Right lobe of liver (tissue), 6 donors: ENCODE measurements at regions of chr3 and their contacts with region 1.

Region 1: GRCh38 chr3:177359593-177360357 is 162.5 kb upstream of the TBL1XR1 start:
- DNase-seq: peak; percentile 94
- ATAC-seq: peak; percentile 75 to 85 (median 82)
- H3K4me3 ChIP-seq: peak overlapping the region; percentile 27 to 58 (median 46)
- H3K27ac ChIP-seq: peak overlapping the region; percentile 83 to 91 (median 85)
- H3K4me1 ChIP-seq: peaks cover 4 to 16% (median 8%) of the 10 kb centered on the region in 4 donors
- H3K27me3 ChIP-seq: no peaks in the 10 kb centered on the region
- CTCF ChIP-seq: peak in 2 of 4 donors; percentile 9 to 22
- POLR2A ChIP-seq: peak; percentile 63

Region 2: DNA sequence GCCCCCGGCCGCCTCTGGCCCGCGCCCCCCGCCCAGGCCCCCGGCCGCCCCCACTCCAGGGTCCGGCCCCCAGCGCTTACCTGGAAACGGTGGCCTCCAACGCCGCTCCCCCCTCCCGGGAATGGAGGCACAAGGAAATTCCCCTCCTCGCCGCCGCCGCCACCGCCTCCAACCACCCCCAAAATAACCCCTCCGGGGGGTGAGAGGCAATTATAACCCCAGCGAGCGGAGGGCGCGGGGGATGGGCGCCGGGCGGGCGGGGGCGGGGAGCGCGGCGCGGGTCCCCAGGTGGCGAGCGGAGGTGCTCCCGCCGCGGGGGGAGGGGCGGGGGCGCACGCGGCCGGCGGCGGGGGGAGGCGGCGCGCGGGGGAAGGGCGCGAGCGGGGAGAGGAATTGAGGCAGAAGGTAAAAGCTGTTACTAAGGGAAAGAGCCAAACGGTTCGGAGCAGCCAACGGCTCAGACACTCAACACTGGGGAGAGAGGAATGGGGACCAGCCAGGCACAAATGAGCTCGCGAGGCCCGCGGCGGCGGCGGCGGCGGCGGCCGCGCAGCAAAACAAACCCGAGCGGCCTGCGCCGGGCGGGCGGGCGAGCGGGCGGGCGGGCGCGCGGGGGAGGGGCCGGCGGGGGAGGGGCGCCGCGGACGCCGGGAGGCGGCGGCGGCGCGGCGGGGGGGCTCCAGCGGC is 162.6 kb before region 1 on chr3 and contains the start of gene TBL1XR1:
- intact Hi-C with region 1: loop called in 1 of 2 experiments (anchors 5 kb)
- DNase-seq: peak; percentile 91 to 95 (median 93)
- ATAC-seq: peak; percentile 77 to 90 (median 85)
- H3K4me3 ChIP-seq: peak within 1 kb of the TSS; percentile 62 to 77 (median 75)
- H3K27ac ChIP-seq: peak within 1 kb of the TSS; percentile 86 to 95 (median 93)
- H3K4me1 ChIP-seq: peaks cover 0 to 11% (median 5%) of the 10 kb centered on the region in 4 donors
- H3K27me3 ChIP-seq: no peaks in the 10 kb centered on the region
- CTCF ChIP-seq: no peak
- POLR2A ChIP-seq: no peak
- total RNA-seq, gene TBL1XR1: 32.6 to 80.6 (median 56.2) TPM

Region 3: DNA sequence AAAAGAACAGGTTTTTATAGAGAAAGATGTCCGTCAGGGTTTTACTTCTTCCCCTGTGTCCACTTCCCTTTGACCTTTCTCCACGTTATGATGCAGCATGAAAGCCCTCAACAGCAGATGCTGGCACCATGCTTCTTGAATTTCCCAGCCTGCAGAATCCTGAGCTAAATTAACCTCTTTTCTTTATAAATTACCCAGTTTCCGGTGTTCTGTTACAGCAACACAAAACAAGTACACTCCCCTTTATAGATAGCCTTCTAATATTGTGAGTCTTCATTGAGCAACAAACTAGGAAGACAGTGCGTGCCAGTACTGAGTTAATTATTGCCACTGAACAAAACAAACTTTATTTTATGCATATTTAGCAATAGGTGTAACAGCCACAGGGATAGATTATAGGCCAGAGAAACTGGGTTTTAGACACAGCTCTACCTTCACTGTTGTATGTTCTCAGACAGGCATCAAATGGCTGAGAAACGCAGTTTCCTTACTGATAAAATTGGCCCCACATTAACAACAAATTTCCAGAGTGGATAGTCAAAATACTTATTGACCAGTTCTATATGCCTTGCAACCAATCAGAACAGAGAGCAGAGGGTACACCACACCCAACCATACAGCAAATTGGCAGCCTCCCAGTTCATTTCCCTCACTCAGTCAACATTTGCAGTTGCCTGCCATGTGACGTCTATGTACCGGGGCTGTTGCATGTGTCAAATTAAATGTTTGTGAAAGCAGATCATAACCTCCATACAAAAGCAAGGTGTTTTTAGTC is 148.1 kb before region 1 on chr3:
- intact Hi-C with region 1: loop called in 1 of 2 experiments (anchors 5 kb)
- DNase-seq: peak; percentile 70 to 85 (median 72)
- ATAC-seq: peak; percentile 82 to 92 (median 86)
- H3K4me3 ChIP-seq: peak overlapping the region in 2 of 3 donors; percentile 22 to 23
- H3K27ac ChIP-seq: peak overlapping the region; percentile 70 to 92 (median 84)
- H3K4me1 ChIP-seq: peaks cover 0 to 15% (median 5%) of the 10 kb centered on the region in 4 donors
- H3K27me3 ChIP-seq: no peaks in the 10 kb centered on the region
- CTCF ChIP-seq: peak in 1 of 4 donors; percentile 5
- POLR2A ChIP-seq: peak; percentile 61

Region 4: DNA sequence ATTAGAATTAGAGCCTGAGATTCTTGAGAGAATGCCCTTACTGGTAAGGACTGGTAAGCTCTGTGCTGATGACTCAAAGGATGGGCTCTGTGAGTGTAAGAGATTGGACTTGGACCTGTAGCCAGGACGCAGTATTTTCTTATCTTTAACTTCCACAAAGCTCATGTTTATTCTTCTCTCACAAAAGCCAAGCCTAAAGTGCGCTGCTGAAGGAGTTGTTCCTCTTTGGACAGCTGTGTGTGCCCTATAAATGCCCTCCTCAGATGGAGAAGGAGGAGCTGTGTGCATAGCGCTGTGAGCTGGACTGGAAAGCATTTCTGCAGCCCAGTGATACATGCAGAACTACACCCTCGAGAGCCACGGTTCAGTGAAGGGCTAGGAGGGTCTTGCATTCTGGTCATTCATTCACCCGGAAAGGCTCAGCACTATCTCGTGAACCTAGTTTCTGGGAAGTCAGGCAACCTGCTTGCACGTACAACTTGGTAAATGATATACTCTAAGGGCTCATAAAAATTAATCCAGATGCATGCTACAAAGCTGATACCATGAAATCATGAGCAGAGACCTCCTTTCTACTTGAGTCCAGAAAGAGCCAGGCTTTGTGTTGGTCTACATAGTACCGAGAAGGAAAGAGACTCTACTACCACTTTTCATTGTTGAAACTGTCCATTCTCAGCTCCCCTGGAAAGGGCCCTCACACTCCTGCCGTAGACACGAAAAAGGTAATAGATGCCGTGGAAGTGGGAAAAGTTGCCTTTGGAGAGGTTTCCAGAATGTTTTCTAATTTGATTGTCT is 59.5 kb before region 1 on chr3:
- intact Hi-C with region 1: no loop called
- DNase-seq: peak in 1 of 3 donors; percentile 50
- ATAC-seq: peak; percentile 70 to 92 (median 86)
- H3K4me3 ChIP-seq: no peak overlapping the region
- H3K27ac ChIP-seq: peak overlapping the region in 1 of 3 donors; percentile 52
- H3K4me1 ChIP-seq: peaks cover 0 to 14% (median 0%) of the 10 kb centered on the region in 4 donors
- H3K27me3 ChIP-seq: no peaks in the 10 kb centered on the region
- CTCF ChIP-seq: no peak
- POLR2A ChIP-seq: no peak

Region 5: GRCh38 chr3:177529716-177530335 is 170.1 kb after region 1 on chr3:
- intact Hi-C with region 1: no loop called
- DNase-seq: no peak
- ATAC-seq: no peak
- H3K4me3 ChIP-seq: no peak overlapping the region
- H3K27ac ChIP-seq: no peak overlapping the region
- H3K4me1 ChIP-seq: no peaks in the 10 kb centered on the region
- H3K27me3 ChIP-seq: no peaks in the 10 kb centered on the region
- CTCF ChIP-seq: no peak
- POLR2A ChIP-seq: no peak